ENCODE measurements at regions of chr13 and their contacts with region 1.

Region 1: GRCh38 chr13:24228852-24229458 is 68.4 kb downstream of the SPATA13 start:
- DNase-seq: peak; percentile 52
- H3K4me3 ChIP-seq: no peak overlapping the region
- H3K27ac ChIP-seq: no peak overlapping the region
- H3K27me3 ChIP-seq: no peaks in the 10 kb centered on the region
- CTCF ChIP-seq: peak; percentile 90

Region 2: DNA sequence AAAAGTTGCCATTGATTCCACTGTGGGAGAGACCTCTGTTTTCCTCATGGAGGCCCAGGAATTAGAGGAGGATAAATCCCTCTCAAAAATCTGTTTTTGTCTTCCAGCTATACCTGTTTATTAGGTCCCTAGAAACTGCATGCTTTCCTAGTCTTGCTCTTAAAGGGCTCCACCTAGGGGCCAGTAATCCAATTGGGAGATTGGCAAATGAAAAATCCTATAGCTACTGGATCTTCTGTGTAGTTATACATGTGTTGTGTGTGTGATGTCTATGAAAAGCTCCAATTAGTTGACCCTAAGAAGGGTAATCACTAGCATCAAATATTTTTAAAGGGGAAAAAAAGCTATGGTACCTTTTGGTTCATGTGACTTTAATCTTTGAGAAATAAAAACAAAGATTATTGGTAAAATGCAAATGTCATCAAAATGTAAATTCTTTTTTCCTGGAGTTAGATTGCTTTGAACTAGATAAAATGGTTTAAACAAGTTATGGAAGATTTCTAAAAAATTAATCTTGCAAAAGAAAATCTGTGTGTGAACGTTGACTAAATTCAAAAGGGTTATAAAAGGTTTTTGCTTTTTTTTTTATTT is 268.3 kb before region 1 on chr13:
- CTCF ChIA-PET with region 1: interaction called, 17 read pairs
- POLR2A ChIA-PET with region 1: no interaction called
- DNase-seq: no peak
- H3K4me3 ChIP-seq: no peak overlapping the region
- H3K27ac ChIP-seq: no peak overlapping the region
- H3K27me3 ChIP-seq: no peaks in the 10 kb centered on the region
- CTCF ChIP-seq: peak; percentile 94

Region 3: GRCh38 chr13:24020375-24020830 is 208.6 kb before region 1 on chr13:
- CTCF ChIA-PET with region 1: interaction called, 89 read pairs
- POLR2A ChIA-PET with region 1: interaction called, 11 read pairs
- DNase-seq: peak; percentile 54
- H3K4me3 ChIP-seq: no peak overlapping the region
- H3K27ac ChIP-seq: no peak overlapping the region
- H3K27me3 ChIP-seq: no peaks in the 10 kb centered on the region
- CTCF ChIP-seq: peak; percentile 88

Region 4: GRCh38 chr13:24053519-24054251 is 175.3 kb before region 1 on chr13:
- CTCF ChIA-PET with region 1: interaction called, 18 read pairs
- POLR2A ChIA-PET with region 1: no interaction called
- DNase-seq: no peak
- H3K4me3 ChIP-seq: no peak overlapping the region
- H3K27ac ChIP-seq: peak overlapping the region; percentile 43
- H3K27me3 ChIP-seq: no peaks in the 10 kb centered on the region
- CTCF ChIP-seq: peak; percentile 84

Region 5: DNA sequence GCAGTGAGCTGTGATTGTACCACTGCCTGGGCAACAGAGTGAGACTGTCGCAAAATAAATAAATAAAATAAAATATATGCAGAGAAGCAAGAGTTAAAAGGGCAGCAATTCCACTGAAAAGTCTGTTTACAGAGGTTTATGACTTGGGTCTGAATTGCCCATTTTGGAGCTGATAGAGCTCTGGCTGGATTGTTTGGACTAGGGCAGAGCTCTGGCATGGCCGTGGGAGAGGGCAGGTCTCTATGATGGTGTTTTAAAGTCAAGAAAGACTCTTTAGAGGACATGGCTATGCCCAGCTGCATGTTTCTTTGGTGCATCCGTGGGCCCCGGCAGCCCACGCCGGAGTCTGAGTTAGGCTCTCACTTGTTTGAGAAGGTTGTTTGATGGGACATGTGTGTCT is 15.8 kb after region 1 on chr13:
- CTCF ChIA-PET with region 1: interaction called, 10 read pairs
- POLR2A ChIA-PET with region 1: no interaction called
- DNase-seq: no peak
- H3K4me3 ChIP-seq: no peak overlapping the region
- H3K27ac ChIP-seq: no peak overlapping the region
- H3K27me3 ChIP-seq: no peaks in the 10 kb centered on the region
- CTCF ChIP-seq: no peak

Region 6: DNA sequence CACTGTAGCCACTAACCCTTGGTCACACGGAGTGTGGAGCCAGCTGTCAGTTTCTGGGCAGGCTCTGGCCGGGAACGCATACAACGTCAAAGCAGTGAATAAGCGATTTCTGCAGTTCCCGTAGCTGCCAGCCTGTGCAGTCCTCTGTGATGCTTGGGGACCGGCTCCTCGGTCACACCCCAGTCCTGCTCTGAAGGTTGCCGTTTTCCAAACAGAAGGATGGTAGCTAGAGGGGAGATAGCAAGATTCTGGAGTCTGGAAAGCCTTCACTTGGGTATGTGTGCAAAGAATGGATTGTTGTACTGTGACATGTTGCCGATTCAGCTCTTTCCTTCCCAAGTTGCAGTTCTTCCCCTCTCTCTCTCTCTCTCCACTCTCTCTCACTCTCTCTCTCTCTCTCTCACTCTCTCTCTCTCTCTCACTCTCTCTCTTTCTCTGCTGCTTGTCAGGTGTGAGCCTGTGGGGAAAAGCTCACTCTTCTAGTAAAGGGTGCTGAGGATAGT is 41.7 kb after region 1 on chr13:
- CTCF ChIA-PET with region 1: interaction called, 18 read pairs
- POLR2A ChIA-PET with region 1: no interaction called
- DNase-seq: no peak
- H3K4me3 ChIP-seq: peak overlapping the region; percentile 54
- H3K27ac ChIP-seq: peak overlapping the region; percentile 75
- H3K27me3 ChIP-seq: no peaks in the 10 kb centered on the region
- CTCF ChIP-seq: no peak

Region 7: GRCh38 chr13:24459234-24459633 is 230.3 kb after region 1 on chr13:
- CTCF ChIA-PET with region 1: no interaction called
- POLR2A ChIA-PET with region 1: no interaction called
- DNase-seq: peak; percentile 75
- H3K4me3 ChIP-seq: no peak overlapping the region
- H3K27ac ChIP-seq: no peak overlapping the region
- H3K27me3 ChIP-seq: no peaks in the 10 kb centered on the region
- CTCF ChIP-seq: no peak

Region 8: DNA sequence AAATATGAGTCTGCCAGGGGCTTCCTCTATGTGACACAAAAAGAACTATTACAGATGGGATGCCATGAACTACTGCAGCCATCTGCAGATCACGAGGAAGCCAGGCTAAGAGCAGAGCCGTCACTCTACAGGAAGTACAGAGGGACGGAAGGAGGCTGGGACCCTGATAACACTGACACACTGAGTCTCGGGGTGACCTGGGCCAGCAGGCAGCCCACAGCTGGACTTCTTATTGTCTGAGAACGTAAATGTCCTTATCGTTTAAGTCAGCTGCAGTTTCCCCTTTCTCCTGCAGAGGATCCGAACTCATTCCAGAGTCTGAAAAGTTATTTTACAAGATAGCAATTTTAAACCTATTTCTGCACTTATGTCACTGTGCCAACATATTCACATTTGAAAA is 262.9 kb after region 1 on chr13:
- CTCF ChIA-PET with region 1: no interaction called
- POLR2A ChIA-PET with region 1: no interaction called
- DNase-seq: no peak
- H3K4me3 ChIP-seq: no peak overlapping the region
- H3K27ac ChIP-seq: no peak overlapping the region
- H3K27me3 ChIP-seq: no peaks in the 10 kb centered on the region
- CTCF ChIP-seq: peak; percentile 21; the same call in 1 of the 2 replicates

Measured in AG04450 (cell line).